Calu3 (cell line): ENCODE measurements at regions of chr7 and their contacts with region 1.

Region 1: GRCh38 chr7:22559829-22560489 is 60.0 kb upstream of the STEAP1B start:
- DNase-seq: peak; percentile 87
- H3K4me3 Mint-ChIP-seq: no peak overlapping the region
- H3K27ac Mint-ChIP-seq: peak overlapping the region; percentile 29
- H3K4me1 Mint-ChIP-seq: peaks cover 31% of the 10 kb centered on the region
- H3K27me3 Mint-ChIP-seq: peaks cover 18% of the 10 kb centered on the region
- CTCF ChIP-seq: peak; percentile 99

Region 2: GRCh38 chr7:22402250-22402649 is 157.7 kb before region 1 on chr7:
- CTCF ChIA-PET with region 1: no interaction called
- intact Hi-C with region 1: no loop called
- DNase-seq: no peak
- H3K4me3 Mint-ChIP-seq: no peak overlapping the region
- H3K27ac Mint-ChIP-seq: no peak overlapping the region
- H3K4me1 Mint-ChIP-seq: peaks cover 22% of the 10 kb centered on the region
- H3K27me3 Mint-ChIP-seq: no peaks in the 10 kb centered on the region
- CTCF ChIP-seq: no peak

Region 3: DNA sequence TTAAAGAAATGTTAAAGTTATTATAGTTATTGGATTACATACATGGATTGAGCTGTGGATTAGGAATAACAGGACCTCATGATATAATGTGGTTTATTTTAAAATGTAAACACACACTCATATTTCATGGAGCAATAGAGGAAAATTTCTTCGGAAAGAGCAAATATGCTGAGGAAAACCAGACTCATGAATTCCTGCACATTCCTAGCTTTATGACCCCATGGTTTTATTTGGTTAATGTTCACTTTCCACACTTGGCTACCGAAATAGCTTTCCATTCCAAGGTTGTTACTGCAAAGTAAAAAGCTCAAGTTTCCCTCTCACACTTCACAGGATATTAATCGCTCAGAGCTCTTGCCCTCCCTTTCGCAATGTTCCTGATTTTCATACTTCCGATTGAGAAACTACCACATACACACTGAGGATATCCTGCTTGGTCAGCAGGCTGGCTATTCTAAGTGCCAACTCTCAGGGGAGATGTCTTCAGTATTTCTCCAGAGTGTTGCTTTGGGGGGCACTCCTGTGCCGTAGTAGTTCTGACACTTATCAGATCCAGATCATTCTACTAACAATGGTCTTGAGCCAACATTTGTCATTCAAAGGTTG is 17.5 kb after region 1 on chr7:
- CTCF ChIA-PET with region 1: interaction called, 64 read pairs
- intact Hi-C with region 1: loop called (anchors 1 kb)
- DNase-seq: peak; percentile 71
- H3K4me3 Mint-ChIP-seq: peak overlapping the region; percentile 59
- H3K27ac Mint-ChIP-seq: peak overlapping the region; percentile 96
- H3K4me1 Mint-ChIP-seq: peaks cover 75% of the 10 kb centered on the region
- H3K27me3 Mint-ChIP-seq: no peaks in the 10 kb centered on the region
- CTCF ChIP-seq: no peak

Region 4: GRCh38 chr7:22640269-22640668 is 80.3 kb after region 1 on chr7:
- CTCF ChIA-PET with region 1: no interaction called
- intact Hi-C with region 1: loop called (anchors 5 kb)
- DNase-seq: no peak
- H3K4me3 Mint-ChIP-seq: no peak overlapping the region
- H3K27ac Mint-ChIP-seq: no peak overlapping the region
- H3K4me1 Mint-ChIP-seq: no peaks in the 10 kb centered on the region
- H3K27me3 Mint-ChIP-seq: no peaks in the 10 kb centered on the region
- CTCF ChIP-seq: no peak

Region 5: DNA sequence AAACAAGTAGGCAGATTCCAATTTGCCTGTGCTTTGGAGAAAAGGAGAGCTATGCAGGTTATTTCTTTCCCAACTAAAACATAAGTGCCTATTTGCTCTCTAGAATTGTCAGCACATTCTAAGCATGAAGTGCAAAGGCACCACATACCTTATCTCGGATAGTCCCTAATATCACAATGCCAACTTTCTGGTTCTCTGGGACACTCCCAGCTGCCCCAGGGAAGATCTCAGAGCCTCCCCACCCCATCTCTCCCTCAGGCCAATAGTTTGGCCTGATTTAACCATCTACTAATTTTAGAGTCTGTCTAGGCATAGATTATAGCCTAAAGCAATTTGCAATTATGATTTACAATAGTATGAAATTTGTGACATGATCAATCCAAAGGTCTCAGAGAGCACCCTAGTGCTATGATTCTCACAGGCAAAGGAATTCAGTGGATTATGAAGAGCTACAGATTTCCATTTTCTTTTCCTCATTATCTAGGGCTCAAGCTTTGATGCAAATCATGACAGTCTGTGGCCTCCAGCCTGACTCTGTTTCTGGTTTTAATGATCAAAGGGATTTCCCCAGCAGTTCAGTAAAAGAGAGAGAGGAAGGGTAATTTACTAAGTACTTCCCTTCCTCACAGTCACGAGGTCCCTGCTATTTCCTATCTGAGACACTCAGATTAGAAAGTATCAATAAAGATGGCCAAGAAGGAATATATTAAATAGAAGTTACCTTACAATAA is 138.1 kb after region 1 on chr7:
- CTCF ChIA-PET with region 1: interaction called, 10 read pairs
- intact Hi-C with region 1: no loop called
- DNase-seq: no peak
- H3K4me3 Mint-ChIP-seq: no peak overlapping the region
- H3K27ac Mint-ChIP-seq: no peak overlapping the region
- H3K4me1 Mint-ChIP-seq: peaks cover 32% of the 10 kb centered on the region
- H3K27me3 Mint-ChIP-seq: no peaks in the 10 kb centered on the region
- CTCF ChIP-seq: no peak

Region 6: DNA sequence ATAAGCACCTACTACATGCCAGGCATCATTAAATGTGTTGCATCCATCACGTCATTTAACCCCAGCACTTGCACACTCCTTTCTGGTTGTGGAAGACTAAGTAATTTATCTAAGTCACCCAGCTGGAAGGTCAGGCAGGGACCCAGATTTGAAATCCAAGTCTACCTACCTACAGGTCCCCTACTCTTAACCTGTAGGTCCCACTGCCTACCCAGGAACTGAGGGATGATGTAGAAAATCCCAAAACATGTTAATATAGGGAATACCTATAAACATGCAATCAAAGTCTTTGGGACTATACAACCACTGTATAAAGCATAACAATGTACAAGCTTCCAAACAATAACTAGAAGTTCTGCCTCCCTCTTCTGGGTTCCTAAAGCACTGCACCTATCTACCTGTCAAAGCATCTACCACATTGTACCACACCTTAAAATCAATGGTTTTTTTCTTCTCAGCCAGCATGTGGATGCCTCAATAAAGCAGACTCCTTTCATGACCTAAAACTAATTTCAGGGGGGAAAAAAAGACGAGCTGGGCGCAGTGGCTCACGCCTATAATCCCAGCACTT is 172.7 kb after region 1 on chr7:
- CTCF ChIA-PET with region 1: interaction called, 327 read pairs
- intact Hi-C with region 1: loop called (anchors 1 kb)
- DNase-seq: peak; percentile 67
- H3K4me3 Mint-ChIP-seq: no peak overlapping the region
- H3K27ac Mint-ChIP-seq: no peak overlapping the region
- H3K4me1 Mint-ChIP-seq: peaks cover 20% of the 10 kb centered on the region
- H3K27me3 Mint-ChIP-seq: peaks cover 15% of the 10 kb centered on the region
- CTCF ChIP-seq: peak; percentile 69

Region 7: GRCh38 chr7:22854158-22855048 is 294.4 kb after region 1 on chr7:
- CTCF ChIA-PET with region 1: no interaction called
- intact Hi-C with region 1: loop called (anchors 10 kb)
- DNase-seq: peak; percentile 86
- H3K4me3 Mint-ChIP-seq: peak overlapping the region; percentile 89
- H3K27ac Mint-ChIP-seq: peak overlapping the region; percentile 67
- H3K4me1 Mint-ChIP-seq: peaks cover 14% of the 10 kb centered on the region
- H3K27me3 Mint-ChIP-seq: peaks cover 22% of the 10 kb centered on the region
- CTCF ChIP-seq: peak; percentile 99

Region 8: GRCh38 chr7:23287612-23288011 is 727.7 kb after region 1 on chr7:
- CTCF ChIA-PET with region 1: no interaction called
- intact Hi-C with region 1: no loop called
- DNase-seq: no peak
- H3K4me3 Mint-ChIP-seq: no peak overlapping the region
- H3K27ac Mint-ChIP-seq: no peak overlapping the region
- H3K4me1 Mint-ChIP-seq: peaks cover 21% of the 10 kb centered on the region
- H3K27me3 Mint-ChIP-seq: no peaks in the 10 kb centered on the region
- CTCF ChIP-seq: no peak